MCF 10A (cell line): ENCODE measurements at regions of chr7 and their contacts with region 1.

Region 1: GRCh38 chr7:12490117-12490688 is 80.3 kb upstream of the SCIN start:
- DNase-seq: peak; percentile 35
- H3K4me3 Mint-ChIP-seq: no peak overlapping the region
- H3K27ac Mint-ChIP-seq: no peak overlapping the region
- H3K4me1 Mint-ChIP-seq: no peaks in the 10 kb centered on the region
- H3K27me3 Mint-ChIP-seq: peaks cover 17% of the 10 kb centered on the region
- CTCF ChIP-seq: peak; percentile 42

Region 2: GRCh38 chr7:11373546-11374142 is 1116.6 kb before region 1 on chr7:
- CTCF ChIA-PET with region 1: interaction called, 5 read pairs
- POLR2A ChIA-PET with region 1: no interaction called
- intact Hi-C with region 1: loop called (anchors 10 kb)
- DNase-seq: peak; percentile 33
- H3K4me3 Mint-ChIP-seq: no peak overlapping the region
- H3K27ac Mint-ChIP-seq: no peak overlapping the region
- H3K4me1 Mint-ChIP-seq: no peaks in the 10 kb centered on the region
- H3K27me3 Mint-ChIP-seq: peaks cover 39% of the 10 kb centered on the region
- CTCF ChIP-seq: peak; percentile 45

Region 3: GRCh38 chr7:11427686-11428273 is 1062.4 kb before region 1 on chr7:
- CTCF ChIA-PET with region 1: no interaction called
- POLR2A ChIA-PET with region 1: no interaction called
- intact Hi-C with region 1: loop called (anchors 5 kb)
- DNase-seq: peak; percentile 67
- H3K4me3 Mint-ChIP-seq: no peak overlapping the region
- H3K27ac Mint-ChIP-seq: no peak overlapping the region
- H3K4me1 Mint-ChIP-seq: no peaks in the 10 kb centered on the region
- H3K27me3 Mint-ChIP-seq: no peaks in the 10 kb centered on the region
- CTCF ChIP-seq: peak; percentile 59

Region 4: GRCh38 chr7:11896663-11897062 is 593.5 kb before region 1 on chr7:
- CTCF ChIA-PET with region 1: no interaction called
- POLR2A ChIA-PET with region 1: no interaction called
- intact Hi-C with region 1: no loop called
- DNase-seq: no peak
- H3K4me3 Mint-ChIP-seq: no peak overlapping the region
- H3K27ac Mint-ChIP-seq: no peak overlapping the region
- H3K4me1 Mint-ChIP-seq: no peaks in the 10 kb centered on the region
- H3K27me3 Mint-ChIP-seq: no peaks in the 10 kb centered on the region
- CTCF ChIP-seq: no peak

Region 5: GRCh38 chr7:12389089-12389700 is 101.0 kb before region 1 on chr7:
- CTCF ChIA-PET with region 1: interaction called, 22 read pairs
- POLR2A ChIA-PET with region 1: no interaction called
- intact Hi-C with region 1: loop called (anchors 1 kb)
- DNase-seq: peak; percentile 72
- H3K4me3 Mint-ChIP-seq: no peak overlapping the region
- H3K27ac Mint-ChIP-seq: no peak overlapping the region
- H3K4me1 Mint-ChIP-seq: no peaks in the 10 kb centered on the region
- H3K27me3 Mint-ChIP-seq: no peaks in the 10 kb centered on the region
- CTCF ChIP-seq: peak; percentile 84

Region 6: DNA sequence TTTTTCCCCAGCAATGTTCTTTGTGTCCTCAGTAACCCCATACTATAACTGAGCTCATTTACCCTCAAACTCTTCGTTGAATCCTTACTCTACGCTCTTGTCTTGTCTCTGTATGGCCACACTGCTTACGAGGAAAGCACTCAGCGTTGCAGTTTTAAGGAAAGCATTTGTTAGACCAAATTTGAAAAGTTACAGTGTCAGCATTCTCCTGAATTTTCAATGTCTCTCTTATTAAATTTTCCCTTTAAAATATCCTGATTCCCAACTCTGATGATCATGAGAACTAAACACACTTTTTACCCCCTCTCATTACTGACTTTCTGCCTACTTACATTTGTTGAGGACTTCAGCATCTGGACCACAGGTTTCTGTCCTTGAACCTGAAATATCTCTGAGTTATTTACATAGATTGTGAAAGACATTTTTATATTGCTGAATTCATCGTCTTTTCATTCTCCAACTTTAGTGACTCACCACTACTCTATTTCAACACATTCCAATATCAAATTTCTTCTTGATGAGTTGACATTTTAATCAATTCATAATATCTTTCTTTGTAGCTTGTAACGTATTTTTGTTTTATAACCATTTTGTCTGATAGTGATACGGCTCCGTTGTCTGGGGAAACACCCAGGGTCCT is 66.7 kb before region 1 on chr7:
- CTCF ChIA-PET with region 1: interaction called, 13 read pairs
- POLR2A ChIA-PET with region 1: interaction called, 3 read pairs
- intact Hi-C with region 1: no loop called
- DNase-seq: peak; percentile 64
- H3K4me3 Mint-ChIP-seq: peak overlapping the region; percentile 0
- H3K27ac Mint-ChIP-seq: peak overlapping the region; percentile 32
- H3K4me1 Mint-ChIP-seq: peaks cover 17% of the 10 kb centered on the region
- H3K27me3 Mint-ChIP-seq: no peaks in the 10 kb centered on the region
- CTCF ChIP-seq: no peak

Region 7: DNA sequence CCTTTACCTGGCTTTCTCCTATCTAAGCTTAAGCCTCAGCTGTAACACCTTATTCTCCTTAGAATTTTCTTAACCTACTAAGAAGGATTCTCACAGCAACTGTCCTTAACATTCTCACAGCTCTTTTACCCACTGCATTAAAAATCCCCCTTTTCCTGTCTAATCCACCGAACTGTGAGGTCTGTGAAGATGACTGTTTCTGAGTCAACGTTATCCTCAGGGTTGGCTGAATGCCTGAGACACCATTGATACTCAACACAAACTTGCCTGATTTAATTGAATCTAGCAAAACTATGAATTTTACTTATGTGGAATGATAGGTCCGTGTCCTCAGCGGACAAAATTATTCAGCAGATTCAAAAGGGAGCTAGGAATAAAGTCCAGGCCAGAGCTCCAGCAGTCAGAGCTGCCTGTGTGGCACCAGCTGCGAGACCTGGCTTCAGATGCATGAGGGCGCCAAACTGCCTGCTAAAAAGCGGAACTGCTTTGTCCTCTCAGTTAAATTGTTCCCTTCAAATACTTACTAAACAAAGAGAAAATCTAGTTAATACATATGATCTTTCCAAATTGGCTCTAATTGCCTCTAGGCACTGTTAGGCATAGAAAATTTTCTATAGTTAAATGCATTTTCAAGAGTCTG is 53.2 kb before region 1 on chr7:
- CTCF ChIA-PET with region 1: interaction called, 19 read pairs
- POLR2A ChIA-PET with region 1: no interaction called
- intact Hi-C with region 1: loop called (anchors 2 kb)
- DNase-seq: peak; percentile 26
- H3K4me3 Mint-ChIP-seq: no peak overlapping the region
- H3K27ac Mint-ChIP-seq: no peak overlapping the region
- H3K4me1 Mint-ChIP-seq: peaks cover 9% of the 10 kb centered on the region
- H3K27me3 Mint-ChIP-seq: peaks cover 10% of the 10 kb centered on the region
- CTCF ChIP-seq: no peak

Region 8: DNA sequence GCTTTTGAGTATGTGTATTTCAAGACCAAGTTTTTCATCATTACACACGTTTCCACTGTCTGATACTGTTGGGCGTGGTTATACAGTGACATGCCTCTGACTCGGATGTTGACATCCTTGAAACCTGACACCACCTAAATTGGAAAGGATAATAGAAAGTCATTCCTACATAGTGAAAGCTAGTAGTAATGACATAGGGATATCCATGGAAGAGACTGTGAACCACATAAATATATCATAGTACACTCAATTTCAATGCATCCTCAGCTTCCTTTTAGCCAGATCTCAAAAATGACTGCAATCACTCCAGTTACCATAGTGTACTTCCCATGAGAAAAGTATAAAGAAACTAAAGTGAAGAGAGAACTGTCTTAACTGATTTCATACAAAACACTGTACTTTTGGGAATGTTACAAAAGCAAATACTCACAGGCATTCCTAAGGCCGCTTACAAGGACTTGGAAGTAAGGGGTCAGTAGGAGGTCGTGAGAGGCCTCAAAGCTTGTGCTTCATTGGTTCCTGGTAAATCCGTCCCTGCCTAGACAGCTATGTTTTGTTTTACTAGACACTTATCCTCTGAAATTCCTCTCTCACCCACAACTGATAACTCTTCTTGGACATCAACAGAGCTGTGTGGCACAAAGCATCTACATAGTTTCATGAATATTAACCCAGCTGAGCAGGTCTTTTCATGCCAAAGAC is 14.7 kb before region 1 on chr7:
- CTCF ChIA-PET with region 1: interaction called, 18 read pairs
- POLR2A ChIA-PET with region 1: interaction called, 3 read pairs
- intact Hi-C with region 1: no loop called
- DNase-seq: peak; percentile 61
- H3K4me3 Mint-ChIP-seq: no peak overlapping the region
- H3K27ac Mint-ChIP-seq: no peak overlapping the region
- H3K4me1 Mint-ChIP-seq: no peaks in the 10 kb centered on the region
- H3K27me3 Mint-ChIP-seq: no peaks in the 10 kb centered on the region
- CTCF ChIP-seq: no peak

Region 9: DNA sequence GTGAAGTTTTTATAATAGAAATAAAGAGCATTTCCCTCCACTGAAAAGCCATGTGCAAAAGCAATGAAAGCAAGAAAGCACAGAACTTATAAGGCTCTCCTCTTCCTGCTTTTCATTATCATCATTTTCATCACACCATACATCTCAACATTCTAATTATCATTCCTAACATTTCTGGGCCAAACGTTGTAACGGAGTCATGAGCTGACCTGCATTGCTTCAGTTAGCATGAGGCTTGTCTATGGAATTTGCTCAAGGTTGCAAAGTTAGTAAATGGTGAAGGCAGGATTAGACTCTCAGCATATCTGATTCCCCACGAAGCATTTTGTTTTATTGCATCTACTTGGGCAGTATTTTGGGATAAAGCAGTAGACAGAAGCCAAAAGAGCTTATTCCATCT is 91.7 kb after region 1 on chr7:
- CTCF ChIA-PET with region 1: no interaction called
- POLR2A ChIA-PET with region 1: no interaction called
- intact Hi-C with region 1: no loop called
- DNase-seq: no peak
- H3K4me3 Mint-ChIP-seq: no peak overlapping the region
- H3K27ac Mint-ChIP-seq: no peak overlapping the region
- H3K4me1 Mint-ChIP-seq: no peaks in the 10 kb centered on the region
- H3K27me3 Mint-ChIP-seq: no peaks in the 10 kb centered on the region
- CTCF ChIP-seq: no peak

Region 10: GRCh38 chr7:12979181-12979580 is 489.0 kb after region 1 on chr7:
- CTCF ChIA-PET with region 1: no interaction called
- POLR2A ChIA-PET with region 1: no interaction called
- intact Hi-C with region 1: no loop called
- DNase-seq: no peak
- H3K4me3 Mint-ChIP-seq: no peak overlapping the region
- H3K27ac Mint-ChIP-seq: no peak overlapping the region
- H3K4me1 Mint-ChIP-seq: no peaks in the 10 kb centered on the region
- H3K27me3 Mint-ChIP-seq: no peaks in the 10 kb centered on the region
- CTCF ChIP-seq: no peak